ENCODE measurements at regions of chr9 and their contacts with region 1.

Region 1: DNA sequence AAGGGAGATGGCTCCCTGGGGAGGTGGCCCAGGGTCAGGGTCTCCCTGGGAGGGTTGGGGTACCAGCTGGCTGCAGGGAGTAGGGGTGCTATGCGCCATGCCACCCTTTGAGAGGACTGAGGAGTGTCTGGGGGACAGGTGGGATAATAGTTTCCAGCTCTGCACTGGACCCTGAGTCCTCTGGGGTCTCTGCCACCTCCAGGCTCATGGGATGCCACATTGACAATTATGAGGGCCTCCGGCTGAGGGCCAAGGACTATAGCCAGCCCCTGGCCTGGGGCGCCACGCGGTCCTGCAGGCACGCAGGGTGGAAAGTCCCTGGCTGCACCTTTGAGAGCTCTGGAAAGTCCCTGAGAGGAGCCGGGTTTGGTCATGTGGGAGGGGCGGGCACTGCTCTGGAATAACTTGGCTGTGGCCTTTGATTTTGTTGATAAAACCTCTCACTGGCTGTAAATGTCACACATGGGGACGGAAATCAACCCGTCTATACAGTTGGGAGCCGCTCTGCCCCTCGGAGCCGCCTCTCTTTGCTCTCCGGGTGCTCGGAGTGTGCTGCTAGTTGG is 16.0 kb downstream of the TRAF2 start:
- DNase-seq: peak; percentile 94
- ATAC-seq: peak; percentile 83
- H3K4me3 Mint-ChIP-seq: peak overlapping the region; percentile 47
- H3K27ac Mint-ChIP-seq: peak overlapping the region; percentile 96
- H3K4me1 Mint-ChIP-seq: peaks cover 43% of the 10 kb centered on the region
- H3K27me3 Mint-ChIP-seq: no peaks in the 10 kb centered on the region
- CTCF ChIP-seq: no peak

Region 2: DNA sequence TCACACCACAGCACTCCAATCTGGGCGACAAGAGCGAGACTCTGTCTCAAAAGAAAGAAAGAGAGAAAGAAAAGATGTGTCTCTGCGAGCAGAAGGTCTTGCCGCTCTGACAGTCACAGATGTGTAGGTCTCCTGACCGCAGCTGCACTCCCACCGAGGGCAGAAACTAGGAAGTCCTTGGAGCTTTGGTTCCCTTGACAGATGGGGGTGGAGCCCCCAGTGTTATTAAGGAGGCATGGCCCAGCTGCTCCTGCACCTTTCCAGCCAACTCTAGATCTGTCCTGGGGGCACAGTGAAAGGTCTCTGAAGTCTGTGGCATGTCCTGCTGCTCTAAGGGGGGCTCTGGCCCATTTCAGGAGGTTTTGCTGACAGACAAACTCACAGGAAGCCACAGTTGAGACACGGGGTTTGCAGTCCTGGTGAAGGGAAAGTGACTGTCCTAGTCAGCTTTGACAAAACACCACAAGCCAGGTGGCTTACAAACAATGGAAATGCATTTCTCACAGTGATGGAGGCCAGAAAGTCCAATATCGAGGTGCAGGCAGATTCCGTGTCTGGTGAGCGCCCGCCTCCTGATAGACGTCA is 199.0 kb before region 1 on chr9:
- CTCF ChIA-PET with region 1: no interaction called
- POLR2A ChIA-PET with region 1: no interaction called
- intact Hi-C with region 1: no loop called
- DNase-seq: no peak
- ATAC-seq: no peak
- H3K4me3 Mint-ChIP-seq: no peak overlapping the region
- H3K27ac Mint-ChIP-seq: no peak overlapping the region
- H3K4me1 Mint-ChIP-seq: peaks cover 22% of the 10 kb centered on the region
- H3K27me3 Mint-ChIP-seq: peaks cover 15% of the 10 kb centered on the region
- CTCF ChIP-seq: no peak

Region 3: GRCh38 chr9:136849038-136849959 is 53.0 kb before region 1 on chr9 and contains the start of gene PHPT1:
- CTCF ChIA-PET with region 1: interaction called, 14 read pairs
- POLR2A ChIA-PET with region 1: interaction called, 6 read pairs
- intact Hi-C with region 1: loop called (anchors 5 kb)
- DNase-seq: peak; percentile 98
- ATAC-seq: peak; percentile 92
- H3K4me3 Mint-ChIP-seq: peak within 1 kb of the TSS; percentile 92
- H3K27ac Mint-ChIP-seq: peak within 1 kb of the TSS; percentile 93
- H3K4me1 Mint-ChIP-seq: peaks cover 7% of the 10 kb centered on the region
- H3K27me3 Mint-ChIP-seq: peaks cover 16% of the 10 kb centered on the region
- CTCF ChIP-seq: no peak
- total RNA-seq, gene PHPT1: 123 to 124 TPM

Region 4: GRCh38 chr9:136885950-136886578 is 16.3 kb before region 1 on chr9 and contains the start of gene TRAF2:
- CTCF ChIA-PET with region 1: no interaction called
- POLR2A ChIA-PET with region 1: interaction called, 49 read pairs
- intact Hi-C with region 1: no loop called
- DNase-seq: peak; percentile 98
- ATAC-seq: peak; percentile 88
- H3K4me3 Mint-ChIP-seq: peak within 1 kb of the TSS; percentile 89
- H3K27ac Mint-ChIP-seq: peak within 1 kb of the TSS; percentile 84
- H3K4me1 Mint-ChIP-seq: peaks cover 57% of the 10 kb centered on the region
- H3K27me3 Mint-ChIP-seq: no peaks in the 10 kb centered on the region
- CTCF ChIP-seq: no peak
- total RNA-seq, gene TRAF2: 34.8 to 40.5 TPM